GM12878 (cell line): ENCODE measurements at regions of chr14 and their contacts with region 1.

Region 1: GRCh38 chr14:20427231-20428009 is 8.5 kb downstream of the KLHL33 start:
- DNase-seq: peak; percentile 71
- ATAC-seq: peak; percentile 85
- H3K4me3 ChIP-seq: peak overlapping the region; percentile 50; the same call in 1 of the 2 replicates
- H3K27ac ChIP-seq: peak overlapping the region; percentile 89
- H3K4me1 ChIP-seq: peaks cover 18% of the 10 kb centered on the region
- H3K27me3 ChIP-seq: no peaks in the 10 kb centered on the region
- CTCF ChIP-seq: no peak
- EP300 ChIP-seq: peak; percentile 42 to 74; a peak in 2 of 4 replicates
- POLR2A ChIP-seq: no peak
- RAD21 ChIP-seq: no peak

Region 2: GRCh38 chr14:20400965-20401593 is 26.3 kb before region 1 on chr14:
- CTCF ChIA-PET with region 1: no interaction called
- POLR2A ChIA-PET with region 1: no interaction called
- RAD21 ChIA-PET with region 1: no interaction called
- SMC1A ChIA-PET with region 1: no interaction called
- in situ Hi-C with region 1: no loop called
- intact Hi-C with region 1: no loop called
- DNase-seq: no peak
- ATAC-seq: no peak
- H3K4me3 ChIP-seq: no peak overlapping the region
- H3K27ac ChIP-seq: no peak overlapping the region
- H3K4me1 ChIP-seq: no peaks in the 10 kb centered on the region
- H3K27me3 ChIP-seq: no peaks in the 10 kb centered on the region
- CTCF ChIP-seq: no peak
- EP300 ChIP-seq: no peak
- POLR2A ChIP-seq: no peak
- RAD21 ChIP-seq: no peak

Region 3: GRCh38 chr14:20454516-20455354 is 27.3 kb after region 1 on chr14 and contains the starts of genes APEX1 and OSGEP:
- CTCF ChIA-PET with region 1: interaction called, 4 read pairs
- POLR2A ChIA-PET with region 1: interaction called, 4 read pairs
- RAD21 ChIA-PET with region 1: no interaction called
- SMC1A ChIA-PET with region 1: interaction called, 4 read pairs
- in situ Hi-C with region 1: no loop called
- intact Hi-C with region 1: loop called (anchors 2 kb)
- DNase-seq: peak; percentile 99
- ATAC-seq: peak; percentile 93
- H3K4me3 ChIP-seq: peak within 1 kb of the TSS; percentile 83
- H3K27ac ChIP-seq: peak within 1 kb of the TSS; percentile 98
- H3K4me1 ChIP-seq: peaks cover under 1% of the 10 kb centered on the region
- H3K27me3 ChIP-seq: no peaks in the 10 kb centered on the region
- CTCF ChIP-seq: no peak
- EP300 ChIP-seq: peak in 1 of 2 experiments; percentile 63; a peak in 2 of 4 replicates
- POLR2A ChIP-seq: peak; percentile 93
- RAD21 ChIP-seq: no peak
- polyA plus RNA-seq, gene APEX1: 299 to 320 TPM
- polyA plus RNA-seq, gene OSGEP: 48.9 to 49.4 TPM

Region 4: GRCh38 chr14:20772650-20773049 is 345.2 kb after region 1 on chr14:
- CTCF ChIA-PET with region 1: no interaction called
- POLR2A ChIA-PET with region 1: no interaction called
- RAD21 ChIA-PET with region 1: no interaction called
- SMC1A ChIA-PET with region 1: no interaction called
- in situ Hi-C with region 1: no loop called
- intact Hi-C with region 1: no loop called
- DNase-seq: no peak
- ATAC-seq: no peak
- H3K4me3 ChIP-seq: no peak overlapping the region
- H3K27ac ChIP-seq: no peak overlapping the region
- H3K4me1 ChIP-seq: peaks cover 6% of the 10 kb centered on the region
- H3K27me3 ChIP-seq: no peaks in the 10 kb centered on the region
- CTCF ChIP-seq: no peak
- EP300 ChIP-seq: no peak
- POLR2A ChIP-seq: no peak
- RAD21 ChIP-seq: no peak